BJ (cell line): ENCODE measurements at regions of chr17 and their contacts with region 1.

Region 1: DNA sequence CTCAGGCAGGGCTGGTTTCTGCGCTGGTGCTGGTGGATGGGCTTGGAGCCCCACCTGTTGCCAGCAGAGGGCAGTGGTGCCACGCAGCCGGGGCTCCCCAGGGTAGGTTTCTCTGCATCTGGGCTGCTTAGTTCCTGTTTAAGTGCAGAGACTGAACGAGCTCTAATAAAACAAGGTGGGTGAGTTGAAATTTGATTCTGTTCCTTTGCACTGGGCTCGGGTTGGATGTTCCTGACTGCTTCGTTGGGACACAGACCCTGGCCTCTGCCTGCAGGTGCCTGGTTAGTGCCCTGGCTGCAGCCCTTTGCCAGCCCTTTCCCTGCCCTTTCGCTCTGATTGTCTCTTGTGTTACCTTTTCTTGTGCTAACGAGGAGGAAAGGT is 30.0 kb downstream of the TBCD start:
- DNase-seq: no peak
- H3K4me3 ChIP-seq: no peak overlapping the region
- H3K27me3 ChIP-seq: no peaks in the 10 kb centered on the region
- CTCF ChIP-seq: peak; percentile 99

Region 2: GRCh38 chr17:82876602-82877379 is 94.9 kb after region 1 on chr17:
- CTCF ChIA-PET with region 1: interaction called, 32 read pairs
- POLR2A ChIA-PET with region 1: no interaction called
- DNase-seq: no peak
- H3K4me3 ChIP-seq: no peak overlapping the region
- H3K27me3 ChIP-seq: no peaks in the 10 kb centered on the region
- CTCF ChIP-seq: peak; percentile 76

Region 3: GRCh38 chr17:82884970-82885353 is 103.1 kb after region 1 on chr17:
- CTCF ChIA-PET with region 1: interaction called, 12 read pairs
- POLR2A ChIA-PET with region 1: no interaction called
- DNase-seq: no peak
- H3K4me3 ChIP-seq: no peak overlapping the region
- H3K27me3 ChIP-seq: no peaks in the 10 kb centered on the region
- CTCF ChIP-seq: no peak

Region 4: GRCh38 chr17:82913295-82914042 is 131.6 kb after region 1 on chr17:
- CTCF ChIA-PET with region 1: interaction called, 11 read pairs
- POLR2A ChIA-PET with region 1: no interaction called
- DNase-seq: no peak
- H3K4me3 ChIP-seq: no peak overlapping the region
- H3K27me3 ChIP-seq: no peaks in the 10 kb centered on the region
- CTCF ChIP-seq: no peak

Region 5: GRCh38 chr17:82962864-82963684 is 181.2 kb after region 1 on chr17:
- CTCF ChIA-PET with region 1: interaction called, 11 read pairs
- POLR2A ChIA-PET with region 1: no interaction called
- DNase-seq: peak; percentile 35
- H3K4me3 ChIP-seq: peak overlapping the region; percentile 10; the same call in 1 of the 2 replicates
- H3K27me3 ChIP-seq: no peaks in the 10 kb centered on the region
- CTCF ChIP-seq: peak; percentile 91

Region 6: DNA sequence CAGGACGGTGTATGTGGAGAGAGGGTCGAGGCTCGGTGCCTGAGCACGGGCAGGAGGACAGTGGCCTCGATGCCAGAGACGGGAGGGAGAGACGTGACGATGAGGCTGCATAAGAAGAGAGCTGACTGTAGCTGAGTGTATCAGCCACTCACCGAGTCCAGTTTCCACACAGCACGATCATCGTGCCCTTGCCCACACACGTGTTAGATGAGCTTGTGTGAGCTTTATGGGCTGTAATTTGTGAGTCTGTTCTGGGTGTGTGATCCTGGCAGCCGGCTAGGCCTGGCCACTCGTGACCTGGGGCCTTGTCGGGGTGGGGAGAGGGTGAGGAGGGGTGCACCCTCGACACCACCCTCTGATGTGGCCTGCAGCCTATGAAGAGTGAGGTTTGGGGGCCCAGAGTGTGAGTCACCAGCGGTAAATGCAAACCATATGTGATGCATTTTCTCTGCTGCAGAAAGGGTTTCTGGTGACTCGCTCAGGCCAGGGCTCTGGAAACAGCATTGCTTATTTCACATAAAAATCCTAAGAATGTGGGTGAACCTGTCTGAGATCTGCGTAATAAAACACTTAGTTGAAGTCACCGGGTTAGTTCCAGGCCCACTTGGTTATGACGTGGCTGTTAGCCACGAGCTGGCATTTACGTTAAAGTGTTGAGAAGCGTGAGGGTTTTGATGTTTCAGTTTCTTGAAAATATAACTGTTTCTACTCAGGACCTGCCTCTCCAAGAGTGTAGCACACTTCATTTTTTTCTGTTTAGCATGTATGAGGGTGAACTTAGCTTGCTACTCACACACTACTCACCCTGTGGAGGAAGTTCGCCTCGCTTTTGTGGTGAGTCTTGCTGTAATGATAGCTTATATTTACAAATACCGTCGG is 301.7 kb after region 1 on chr17:
- CTCF ChIA-PET with region 1: interaction called, 10 read pairs
- POLR2A ChIA-PET with region 1: no interaction called
- DNase-seq: peak; percentile 98
- H3K4me3 ChIP-seq: no peak overlapping the region
- H3K27me3 ChIP-seq: no peaks in the 10 kb centered on the region
- CTCF ChIP-seq: no peak

Region 7: DNA sequence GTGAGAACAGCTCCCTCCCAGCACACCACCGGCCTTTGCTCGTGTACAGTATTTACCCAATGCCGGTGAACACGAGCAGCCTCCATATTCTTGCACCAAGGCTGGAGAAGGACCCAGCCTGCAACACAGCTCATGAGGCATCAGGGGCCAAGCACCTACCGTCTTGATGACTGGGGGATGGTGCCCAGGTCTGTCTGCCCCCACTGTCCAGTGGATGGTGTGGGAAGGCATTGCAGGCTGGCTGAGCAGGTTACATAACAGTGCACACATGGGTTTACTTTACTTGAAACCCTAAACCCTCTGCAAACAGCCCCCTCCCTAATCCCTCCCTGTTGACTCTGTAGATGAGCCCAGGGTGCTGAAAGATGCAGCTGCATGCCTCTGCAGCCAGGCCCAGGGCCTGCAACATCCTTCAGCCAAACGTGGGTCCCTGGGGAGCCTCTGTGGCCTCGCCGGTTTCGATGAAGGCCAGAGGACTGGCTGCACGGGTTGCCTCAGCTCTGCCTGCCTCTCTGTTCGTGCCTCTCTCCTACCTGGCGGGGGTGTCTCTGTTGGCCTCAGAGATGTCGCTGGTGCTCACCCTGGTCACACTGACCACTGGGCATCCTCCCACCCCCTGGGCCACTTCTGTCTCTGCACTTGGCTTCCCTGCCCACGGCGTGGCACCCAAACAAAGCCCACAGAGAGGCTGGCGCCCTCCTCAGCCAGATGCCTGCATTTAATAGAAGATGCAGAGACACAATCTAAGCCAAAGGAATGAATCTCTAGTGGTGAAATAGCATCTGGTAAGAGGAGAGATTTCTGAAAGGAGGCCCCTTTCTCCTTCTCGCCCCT is 392.6 kb after region 1 on chr17:
- CTCF ChIA-PET with region 1: no interaction called
- POLR2A ChIA-PET with region 1: no interaction called
- DNase-seq: no peak
- H3K4me3 ChIP-seq: no peak overlapping the region
- H3K27me3 ChIP-seq: peaks cover 4% of the 10 kb centered on the region; the same call in 1 of the 2 replicates
- CTCF ChIP-seq: 0 out of 2 replicates have a peak, but pooled peaks have one; percentile 10

Region 8: DNA sequence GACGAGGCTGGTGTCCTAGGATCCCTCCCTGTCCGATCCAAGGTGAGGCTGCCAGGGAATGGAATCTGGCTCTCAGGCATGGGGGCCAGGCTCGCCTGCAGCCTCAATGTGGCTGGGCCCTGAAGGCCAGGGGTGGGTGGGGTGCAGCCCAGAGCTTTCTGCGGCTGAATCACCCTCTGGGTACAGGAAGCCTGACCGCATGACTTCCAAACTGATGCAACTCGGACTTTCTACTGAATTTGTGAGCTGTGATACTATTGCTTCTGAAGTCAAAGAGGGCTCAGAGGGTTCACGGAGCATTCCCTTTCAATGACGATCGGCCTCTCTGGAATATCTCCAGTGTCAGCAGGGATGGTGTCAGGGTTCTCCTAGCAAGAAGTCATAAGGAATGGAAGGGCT is 421.2 kb after region 1 on chr17:
- CTCF ChIA-PET with region 1: interaction called, 30 read pairs
- POLR2A ChIA-PET with region 1: no interaction called
- DNase-seq: peak; percentile 96
- H3K4me3 ChIP-seq: no peak overlapping the region
- H3K27me3 ChIP-seq: no peaks in the 10 kb centered on the region
- CTCF ChIP-seq: no peak